ENCODE measurements at regions of chr4 and their contacts with region 1.

Region 1: DNA sequence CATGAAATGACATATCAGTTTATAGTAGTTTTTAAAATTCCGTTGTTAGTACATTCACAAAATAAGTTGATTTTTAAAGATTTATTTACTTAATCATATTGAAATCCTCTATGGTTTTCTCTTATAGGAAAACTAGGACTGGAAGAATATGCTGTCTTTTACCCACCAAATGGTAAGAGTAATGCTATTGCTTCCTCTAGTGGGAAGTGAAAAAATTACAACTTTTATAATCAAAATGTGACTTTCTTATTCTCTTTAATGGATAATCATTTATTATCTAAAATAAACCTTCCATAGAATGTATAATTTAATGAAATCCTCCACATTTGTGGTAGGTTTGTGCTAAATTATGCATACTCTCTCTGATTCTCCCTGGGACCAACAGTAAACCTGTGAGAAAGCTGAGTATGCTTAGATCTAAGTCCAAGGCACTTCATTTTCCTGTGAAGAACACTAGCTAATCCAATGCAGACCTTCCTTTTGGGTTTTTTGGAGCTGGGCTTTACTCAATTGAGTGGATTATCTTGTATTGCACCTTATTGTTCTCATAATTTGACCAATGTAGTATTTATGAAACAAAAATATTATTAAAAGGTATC is 136.2 kb downstream of the TBC1D19 start:
- DNase-seq: peak; percentile 35
- H3K4me3 Mint-ChIP-seq: no peak overlapping the region
- H3K27ac Mint-ChIP-seq: no peak overlapping the region
- H3K4me1 Mint-ChIP-seq: peaks cover 8% of the 10 kb centered on the region
- H3K27me3 Mint-ChIP-seq: no peaks in the 10 kb centered on the region
- CTCF ChIP-seq: peak; percentile 67

Region 2: GRCh38 chr4:25981749-25982148 is 738.3 kb before region 1 on chr4:
- CTCF ChIA-PET with region 1: no interaction called
- POLR2A ChIA-PET with region 1: no interaction called
- intact Hi-C with region 1: loop called (anchors 10 kb)
- DNase-seq: no peak
- H3K4me3 Mint-ChIP-seq: no peak overlapping the region
- H3K27ac Mint-ChIP-seq: no peak overlapping the region
- H3K4me1 Mint-ChIP-seq: no peaks in the 10 kb centered on the region
- H3K27me3 Mint-ChIP-seq: no peaks in the 10 kb centered on the region
- CTCF ChIP-seq: no peak

Region 3: DNA sequence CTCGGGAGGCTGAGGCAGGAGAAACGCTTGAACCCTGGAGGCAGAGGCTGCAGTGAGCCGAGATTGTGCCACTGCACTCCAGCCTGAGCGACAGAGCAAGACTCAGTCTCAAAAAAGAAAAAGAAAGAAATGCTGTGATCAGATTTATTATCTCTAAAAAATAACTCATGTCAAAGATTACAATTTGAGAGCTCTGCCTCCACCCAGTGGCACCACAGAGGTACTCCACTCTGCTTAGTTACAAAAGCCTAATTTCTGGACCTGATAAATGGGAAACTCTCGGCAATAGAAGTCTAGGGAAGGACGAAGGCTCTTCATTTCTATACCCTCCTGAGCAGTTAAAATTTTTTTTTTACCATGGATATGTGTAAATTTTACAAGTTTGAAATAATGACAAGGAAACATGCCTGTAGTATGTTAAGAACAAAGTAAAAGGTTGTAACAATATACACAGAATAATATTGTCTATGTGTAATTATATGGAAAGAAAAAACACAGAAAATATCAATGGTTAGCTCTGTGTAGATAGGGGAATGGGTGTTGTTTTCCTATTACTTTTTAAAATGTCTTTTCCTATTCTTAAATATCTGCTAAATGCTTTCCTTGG is 290.4 kb after region 1 on chr4:
- CTCF ChIA-PET with region 1: interaction called, 5 read pairs
- POLR2A ChIA-PET with region 1: no interaction called
- intact Hi-C with region 1: loop called (anchors 2 kb)
- DNase-seq: peak; percentile 59
- H3K4me3 Mint-ChIP-seq: no peak overlapping the region
- H3K27ac Mint-ChIP-seq: peak overlapping the region; percentile 39
- H3K4me1 Mint-ChIP-seq: no peaks in the 10 kb centered on the region
- H3K27me3 Mint-ChIP-seq: no peaks in the 10 kb centered on the region
- CTCF ChIP-seq: peak; percentile 71